Caco-2 (cell line): ENCODE measurements at regions of chr4 and their contacts with region 1.

Region 1: DNA sequence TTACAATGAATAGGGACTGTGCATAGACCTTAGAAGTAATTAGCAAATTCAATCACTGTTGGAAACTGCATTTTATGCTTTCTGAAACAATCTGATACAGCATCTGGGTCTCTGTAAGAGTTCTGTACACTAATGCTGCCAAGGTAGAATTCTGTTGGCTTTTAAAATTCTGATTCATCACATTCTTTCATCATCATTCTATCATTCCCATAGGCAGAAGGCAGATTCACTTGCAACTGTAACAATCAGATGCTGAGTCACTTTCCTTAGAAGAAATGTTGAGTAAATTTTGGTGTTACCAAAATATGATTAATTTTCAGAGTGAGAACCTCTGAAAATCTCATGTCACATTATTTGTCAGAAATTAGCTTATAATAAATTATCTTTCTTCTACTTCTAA is 267.2 kb downstream of the MAPK10 start:
- DNase-seq: no peak
- H3K4me3 ChIP-seq: no peak overlapping the region
- H3K4me3 Mint-ChIP-seq: no peak overlapping the region
- H3K27ac Mint-ChIP-seq: no peak overlapping the region
- H3K4me1 ChIP-seq: no peaks in the 10 kb centered on the region
- H3K4me1 Mint-ChIP-seq: no peaks in the 10 kb centered on the region
- H3K27me3 ChIP-seq: no peaks in the 10 kb centered on the region
- H3K27me3 Mint-ChIP-seq: no peaks in the 10 kb centered on the region
- CTCF ChIP-seq: no peak

Region 2: GRCh38 chr4:85883180-85883579 is 209.5 kb before region 1 on chr4:
- CTCF ChIA-PET with region 1: no interaction called
- POLR2A ChIA-PET with region 1: no interaction called
- intact Hi-C with region 1: no loop called
- DNase-seq: no peak
- H3K4me3 ChIP-seq: no peak overlapping the region
- H3K4me3 Mint-ChIP-seq: no peak overlapping the region
- H3K27ac Mint-ChIP-seq: no peak overlapping the region
- H3K4me1 ChIP-seq: no peaks in the 10 kb centered on the region
- H3K4me1 Mint-ChIP-seq: no peaks in the 10 kb centered on the region
- H3K27me3 ChIP-seq: no peaks in the 10 kb centered on the region
- H3K27me3 Mint-ChIP-seq: peaks cover 8% of the 10 kb centered on the region
- CTCF ChIP-seq: no peak

Region 3: GRCh38 chr4:86151196-86151595 is 58.5 kb after region 1 on chr4:
- CTCF ChIA-PET with region 1: no interaction called
- POLR2A ChIA-PET with region 1: no interaction called
- intact Hi-C with region 1: loop called (anchors 2 kb)
- DNase-seq: no peak
- H3K4me3 ChIP-seq: no peak overlapping the region
- H3K4me3 Mint-ChIP-seq: no peak overlapping the region
- H3K27ac Mint-ChIP-seq: no peak overlapping the region
- H3K4me1 ChIP-seq: no peaks in the 10 kb centered on the region
- H3K4me1 Mint-ChIP-seq: no peaks in the 10 kb centered on the region
- H3K27me3 ChIP-seq: no peaks in the 10 kb centered on the region
- H3K27me3 Mint-ChIP-seq: peaks cover 12% of the 10 kb centered on the region
- CTCF ChIP-seq: no peak